CD8-positive, alpha-beta T cell (primary cell): ENCODE measurements at regions of chr18 and their contacts with region 1.

Region 1: DNA sequence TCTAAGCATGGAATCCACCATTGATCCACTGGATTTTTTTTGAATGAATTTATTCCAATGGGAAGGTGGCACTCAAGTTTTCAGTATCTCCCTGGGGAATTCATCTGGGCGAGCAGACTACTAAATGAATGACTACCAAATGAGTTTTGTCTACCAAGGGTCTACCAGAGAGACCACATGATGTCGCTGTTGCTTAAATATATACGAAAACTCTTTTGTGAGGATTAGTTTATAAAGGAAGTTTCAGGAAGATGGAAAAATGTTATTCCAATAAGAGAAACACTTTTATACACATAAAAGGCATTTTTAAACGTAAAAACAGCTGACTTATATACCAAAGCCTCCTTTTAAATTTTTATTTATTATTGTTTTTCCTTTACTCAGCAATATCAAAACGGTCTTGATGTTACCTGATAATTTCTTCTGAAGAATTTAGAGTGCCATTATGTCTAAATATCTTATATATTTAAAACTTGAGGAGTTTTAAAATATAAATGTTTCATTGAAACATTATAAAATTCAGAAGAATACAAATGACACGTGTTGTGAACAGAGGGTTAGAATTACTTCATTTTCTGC is 139.7 kb downstream of the HRH4 start:
- DNase-seq: peak in 2 of 9 experiments; percentile 33 to 43
- ATAC-seq: no peak
- H3K4me3 ChIP-seq: no peak overlapping the region
- H3K4me3 Mint-ChIP-seq: no peak overlapping the region
- H3K27ac ChIP-seq: no peak overlapping the region
- H3K27ac Mint-ChIP-seq: no peak overlapping the region
- H3K4me1 ChIP-seq: no peaks in the 10 kb centered on the region
- H3K4me1 Mint-ChIP-seq: no peaks in the 10 kb centered on the region
- H3K27me3 ChIP-seq: no peaks in the 10 kb centered on the region
- H3K27me3 Mint-ChIP-seq: peaks cover 11% of the 10 kb centered on the region
- CTCF ChIP-seq: peak; percentile 20

Region 2: GRCh38 chr18:24315170-24315569 is 285.0 kb before region 1 on chr18:
- CTCF ChIA-PET with region 1: no interaction called
- POLR2A ChIA-PET with region 1: no interaction called
- intact Hi-C with region 1: no loop called
- DNase-seq: no peak
- ATAC-seq: no peak
- H3K4me3 ChIP-seq: no peak overlapping the region
- H3K4me3 Mint-ChIP-seq: no peak overlapping the region
- H3K27ac ChIP-seq: no peak overlapping the region
- H3K27ac Mint-ChIP-seq: no peak overlapping the region
- H3K4me1 ChIP-seq: no peaks in the 10 kb centered on the region
- H3K4me1 Mint-ChIP-seq: no peaks in the 10 kb centered on the region
- H3K27me3 ChIP-seq: no peaks in the 10 kb centered on the region
- H3K27me3 Mint-ChIP-seq: no peaks in the 10 kb centered on the region
- CTCF ChIP-seq: no peak

Region 3: DNA sequence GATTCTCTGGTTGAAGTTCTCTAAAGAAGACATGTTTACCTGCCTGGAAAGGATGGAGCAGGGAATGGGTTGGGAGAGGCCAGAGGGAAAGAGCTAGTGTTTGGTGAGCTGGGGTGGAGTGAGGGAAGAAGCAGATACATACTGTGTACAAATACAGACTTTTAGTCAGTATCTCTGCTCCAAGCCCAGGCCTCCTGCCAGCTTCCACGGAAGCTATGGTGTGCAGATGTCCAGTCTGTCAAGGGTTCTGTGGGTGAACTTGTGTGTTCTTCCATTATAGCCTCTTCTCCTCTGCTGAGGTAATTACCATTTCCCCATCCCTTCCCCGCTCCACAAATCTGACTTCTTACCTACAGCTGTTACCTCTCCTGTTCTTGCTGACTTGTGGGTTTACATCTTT is 68.8 kb after region 1 on chr18:
- CTCF ChIA-PET with region 1: interaction called, 3 read pairs
- POLR2A ChIA-PET with region 1: no interaction called
- intact Hi-C with region 1: loop called in 1 of 2 experiments (anchors 5 kb)
- DNase-seq: no peak
- ATAC-seq: no peak
- H3K4me3 ChIP-seq: no peak overlapping the region
- H3K4me3 Mint-ChIP-seq: no peak overlapping the region
- H3K27ac ChIP-seq: no peak overlapping the region
- H3K27ac Mint-ChIP-seq: no peak overlapping the region
- H3K4me1 ChIP-seq: no peaks in the 10 kb centered on the region
- H3K4me1 Mint-ChIP-seq: no peaks in the 10 kb centered on the region
- H3K27me3 ChIP-seq: no peaks in the 10 kb centered on the region
- H3K27me3 Mint-ChIP-seq: peaks cover 13% of the 10 kb centered on the region
- CTCF ChIP-seq: no peak

Region 4: GRCh38 chr18:24726727-24727492 is 126.7 kb after region 1 on chr18:
- CTCF ChIA-PET with region 1: interaction called, 11 read pairs
- POLR2A ChIA-PET with region 1: no interaction called
- intact Hi-C with region 1: loop called (anchors 1 kb)
- DNase-seq: peak; percentile 14 to 72 (median 47)
- ATAC-seq: no peak
- H3K4me3 ChIP-seq: no peak overlapping the region
- H3K4me3 Mint-ChIP-seq: no peak overlapping the region
- H3K27ac ChIP-seq: no peak overlapping the region
- H3K27ac Mint-ChIP-seq: no peak overlapping the region
- H3K4me1 ChIP-seq: no peaks in the 10 kb centered on the region
- H3K4me1 Mint-ChIP-seq: no peaks in the 10 kb centered on the region
- H3K27me3 ChIP-seq: no peaks in the 10 kb centered on the region
- H3K27me3 Mint-ChIP-seq: peaks cover 15% of the 10 kb centered on the region
- CTCF ChIP-seq: peak; percentile 77

Region 5: GRCh38 chr18:25896178-25896780 is 1296.1 kb after region 1 on chr18:
- CTCF ChIA-PET with region 1: no interaction called
- POLR2A ChIA-PET with region 1: no interaction called
- intact Hi-C with region 1: loop called in 1 of 2 experiments (anchors 10 kb)
- DNase-seq: peak in 3 of 9 experiments; percentile 12 to 42 (median 28)
- ATAC-seq: no peak
- H3K4me3 ChIP-seq: no peak overlapping the region
- H3K4me3 Mint-ChIP-seq: no peak overlapping the region
- H3K27ac ChIP-seq: no peak overlapping the region
- H3K27ac Mint-ChIP-seq: no peak overlapping the region
- H3K4me1 ChIP-seq: no peaks in the 10 kb centered on the region
- H3K4me1 Mint-ChIP-seq: peaks cover 1% of the 10 kb centered on the region
- H3K27me3 ChIP-seq: no peaks in the 10 kb centered on the region
- H3K27me3 Mint-ChIP-seq: peaks cover 7% of the 10 kb centered on the region
- CTCF ChIP-seq: peak; percentile 56